MCF 10A (cell line): ENCODE measurements at regions of chr2 and their contacts with region 1.

Region 1: DNA sequence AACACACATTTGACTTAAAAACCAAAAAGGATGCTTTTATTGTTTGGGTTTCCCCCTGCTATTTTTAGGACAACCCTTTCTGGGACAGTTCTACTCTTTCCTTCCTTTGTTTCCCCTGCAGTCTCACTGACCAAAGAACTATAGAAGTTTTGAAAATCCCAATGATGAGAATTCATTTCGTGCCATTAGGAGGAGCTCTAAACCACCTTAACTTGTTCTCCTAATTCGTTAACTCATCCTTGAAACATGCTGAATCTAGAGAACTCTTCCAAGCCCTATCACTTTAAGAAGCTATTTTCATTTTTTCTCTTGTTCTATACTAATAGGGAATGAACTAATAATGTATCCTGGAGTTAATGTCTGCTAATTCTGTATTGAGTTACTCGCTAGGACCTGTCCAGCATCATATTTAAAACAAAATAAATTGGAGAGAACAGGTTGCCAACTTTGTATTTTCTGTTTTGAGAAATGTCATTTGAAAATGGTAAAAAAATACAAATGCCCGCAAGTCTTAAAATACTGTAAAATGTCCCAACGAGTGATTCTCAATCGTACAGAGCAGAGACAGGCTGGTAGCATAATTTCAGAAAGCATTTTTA is 62.9 kb downstream of the AFTPH start:
- DNase-seq: peak; percentile 59
- H3K4me3 Mint-ChIP-seq: no peak overlapping the region
- H3K27ac Mint-ChIP-seq: peak overlapping the region; percentile 57
- H3K4me1 Mint-ChIP-seq: no peaks in the 10 kb centered on the region
- H3K27me3 Mint-ChIP-seq: no peaks in the 10 kb centered on the region
- CTCF ChIP-seq: peak; percentile 67

Region 2: DNA sequence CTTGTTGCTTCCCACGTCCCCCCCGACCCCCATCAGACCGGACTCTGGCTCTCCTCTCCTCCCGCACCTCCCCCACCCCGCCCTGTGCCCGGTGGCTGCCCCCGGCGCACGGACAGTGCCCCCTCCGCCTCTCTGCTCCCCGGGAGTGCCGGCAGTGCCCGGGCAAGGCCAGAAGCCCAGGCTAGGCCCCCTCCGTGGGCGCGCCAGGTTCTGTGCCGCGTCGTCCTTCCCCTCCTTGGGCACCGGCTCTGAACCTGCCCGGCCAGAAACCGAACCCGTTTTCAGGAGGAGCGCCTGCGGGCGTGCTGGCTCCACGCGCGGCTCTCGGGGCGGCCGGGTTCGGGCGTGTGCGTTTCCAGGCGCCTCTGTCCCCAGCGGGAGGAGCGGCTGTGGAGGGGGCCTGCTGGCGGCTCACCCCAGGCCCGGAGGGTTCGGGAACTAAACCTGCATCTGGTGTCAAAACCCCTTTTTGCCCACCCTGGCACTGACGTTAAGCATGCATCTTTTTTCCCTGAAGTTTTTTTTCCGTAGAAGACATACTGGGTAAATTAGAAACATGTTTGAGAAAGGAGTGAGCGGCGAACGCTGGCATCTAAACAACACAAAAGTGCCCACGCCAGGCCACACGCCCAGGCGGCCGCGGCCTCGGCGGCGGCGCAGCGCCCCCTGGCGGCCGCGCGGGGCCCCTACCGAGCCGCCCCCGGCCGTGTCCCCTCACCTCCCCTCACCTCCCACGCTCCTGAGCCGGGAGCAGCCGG is 278.3 kb after region 1 on chr2:
- CTCF ChIA-PET with region 1: interaction called, 30 read pairs
- POLR2A ChIA-PET with region 1: interaction called, 5 read pairs
- intact Hi-C with region 1: loop called (anchors 1 kb)
- DNase-seq: peak; percentile 68
- H3K4me3 Mint-ChIP-seq: peak overlapping the region; percentile 64
- H3K27ac Mint-ChIP-seq: no peak overlapping the region
- H3K4me1 Mint-ChIP-seq: peaks cover 7% of the 10 kb centered on the region
- H3K27me3 Mint-ChIP-seq: no peaks in the 10 kb centered on the region
- CTCF ChIP-seq: peak; percentile 86

Region 3: DNA sequence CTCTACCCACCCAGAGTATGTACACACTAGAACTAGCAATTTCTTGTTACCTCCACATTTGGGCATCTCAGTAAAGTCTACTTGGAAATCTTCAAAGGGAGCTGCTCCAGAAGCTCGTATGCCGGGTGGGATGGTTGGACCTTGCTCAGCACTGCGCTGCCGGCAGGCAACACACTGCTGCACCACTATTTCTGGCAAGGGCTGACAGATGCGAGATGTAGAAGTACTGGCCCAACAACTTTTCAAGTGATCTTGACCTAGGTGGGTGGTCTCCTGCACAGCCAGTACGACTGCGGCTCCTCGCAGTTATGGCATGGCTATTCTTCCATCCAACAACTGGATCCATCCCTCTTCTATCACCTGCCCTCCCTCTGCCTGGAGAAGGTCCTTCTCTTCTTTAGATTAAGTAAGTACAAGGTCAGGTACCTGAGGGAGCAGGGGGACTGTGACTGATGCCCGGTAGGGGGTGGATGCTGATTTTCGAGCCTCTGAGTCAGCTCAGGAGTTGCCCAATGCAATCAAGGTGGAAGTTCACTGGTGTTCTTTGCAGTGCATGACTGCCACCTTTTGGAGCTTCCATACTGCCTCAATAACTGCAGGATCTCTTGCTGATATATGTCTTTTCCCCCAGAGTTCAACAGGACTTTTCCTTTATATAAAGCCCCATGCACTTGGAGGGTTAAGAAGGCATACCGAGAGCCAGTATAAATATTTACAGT is 301.8 kb after region 1 on chr2:
- CTCF ChIA-PET with region 1: interaction called, 5 read pairs
- POLR2A ChIA-PET with region 1: no interaction called
- intact Hi-C with region 1: loop called (anchors 1 kb)
- DNase-seq: peak; percentile 88
- H3K4me3 Mint-ChIP-seq: no peak overlapping the region
- H3K27ac Mint-ChIP-seq: no peak overlapping the region
- H3K4me1 Mint-ChIP-seq: no peaks in the 10 kb centered on the region
- H3K27me3 Mint-ChIP-seq: peaks cover 25% of the 10 kb centered on the region
- CTCF ChIP-seq: peak; percentile 55